ENCODE measurements at regions of chr20 and their contacts with region 1.

Region 1: GRCh38 chr20:63864847-63865640 is at the start of gene TPD52L2:
- H3K4me3 ChIP-seq: peak within 1 kb of the TSS; percentile 93
- H3K27ac ChIP-seq: peak within 1 kb of the TSS; percentile 74
- H3K4me1 ChIP-seq: no peaks in the 10 kb centered on the region
- CTCF ChIP-seq: peak; percentile 14; the same call in 1 of the 2 replicates

Region 2: GRCh38 chr20:63673951-63674350 is 191.1 kb before region 1 on chr20:
- CTCF ChIA-PET with region 1: no interaction called
- POLR2A ChIA-PET with region 1: no interaction called
- H3K4me3 ChIP-seq: no peak overlapping the region
- H3K27ac ChIP-seq: no peak overlapping the region
- H3K4me1 ChIP-seq: no peaks in the 10 kb centered on the region
- CTCF ChIP-seq: no peak

Region 3: GRCh38 chr20:63707549-63708300 is 157.3 kb before region 1 on chr20 and contains the starts of genes ARFRP1 and ZGPAT:
- CTCF ChIA-PET with region 1: no interaction called
- POLR2A ChIA-PET with region 1: interaction called, 16 read pairs
- H3K4me3 ChIP-seq: peak within 1 kb of the TSS; percentile 81
- H3K27ac ChIP-seq: peak within 1 kb of the TSS; percentile 71
- H3K4me1 ChIP-seq: 0 out of 2 replicates have a peak, but pooled peaks cover 3% of the 10 kb centered on the region
- CTCF ChIP-seq: no peak

Region 4: GRCh38 chr20:63740627-63741354 is 124.3 kb before region 1 on chr20:
- CTCF ChIA-PET with region 1: interaction called, 3 read pairs
- POLR2A ChIA-PET with region 1: interaction called, 12 read pairs
- H3K4me3 ChIP-seq: peak overlapping the region; percentile 54
- H3K27ac ChIP-seq: peak overlapping the region; percentile 79
- H3K4me1 ChIP-seq: no peaks in the 10 kb centered on the region; the same call in 1 of the 2 replicates
- CTCF ChIP-seq: peak; percentile 46

Region 5: GRCh38 chr20:63876489-63877036 is 11.5 kb after region 1 on chr20:
- CTCF ChIA-PET with region 1: interaction called, 4 read pairs
- POLR2A ChIA-PET with region 1: interaction called, 18 read pairs
- H3K4me3 ChIP-seq: no peak overlapping the region
- H3K27ac ChIP-seq: no peak overlapping the region
- H3K4me1 ChIP-seq: no peaks in the 10 kb centered on the region
- CTCF ChIP-seq: no peak

Region 6: DNA sequence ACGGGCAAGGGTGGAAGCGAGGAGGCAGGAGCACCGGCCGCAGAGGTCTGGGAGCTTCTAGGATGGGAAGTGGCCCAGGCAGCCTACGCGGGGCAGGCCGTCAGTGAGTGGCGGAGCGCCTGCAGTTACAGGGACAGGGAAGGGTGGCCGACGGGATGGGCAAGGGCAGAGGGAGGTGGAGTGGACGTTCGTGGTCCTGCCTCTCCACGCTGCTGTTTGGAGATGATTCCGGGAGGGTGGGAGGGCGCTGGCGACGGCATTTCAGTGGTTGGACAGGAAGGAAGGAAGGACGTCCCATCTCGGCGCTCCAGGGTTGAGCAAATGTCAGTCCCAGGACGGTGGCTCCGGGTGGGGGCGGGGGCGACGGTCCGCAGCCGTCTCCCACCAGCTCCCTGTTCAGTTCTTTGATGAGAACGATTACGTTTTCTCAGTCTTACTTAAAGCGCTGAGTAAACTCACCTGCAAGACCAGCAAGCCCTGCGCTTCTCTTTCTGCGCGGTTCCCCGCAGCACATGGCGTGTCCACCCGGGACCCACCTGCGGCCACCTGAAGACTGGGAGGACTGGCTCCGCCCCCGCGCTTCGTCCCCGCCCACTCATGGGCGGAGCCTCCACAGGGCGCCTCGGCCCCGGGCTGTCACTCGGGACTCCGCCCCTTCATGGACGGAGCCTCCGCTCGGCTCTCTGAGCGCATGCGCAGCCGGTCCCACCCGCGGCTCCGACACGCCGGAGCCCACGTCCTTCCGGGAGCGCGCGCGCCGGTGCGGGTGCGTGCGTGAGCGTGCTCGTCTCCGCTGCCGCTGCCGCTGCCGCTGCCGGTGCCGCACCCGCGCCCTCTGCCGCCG is 29.5 kb after region 1 on chr20 and contains the start of gene DNAJC5:
- CTCF ChIA-PET with region 1: no interaction called
- POLR2A ChIA-PET with region 1: interaction called, 14 read pairs
- H3K4me3 ChIP-seq: peak within 1 kb of the TSS; percentile 56
- H3K27ac ChIP-seq: no peak within 1 kb of the TSS
- H3K4me1 ChIP-seq: peaks cover 12% of the 10 kb centered on the region
- CTCF ChIP-seq: no peak

Region 7: GRCh38 chr20:63915471-63915870 is 50.4 kb after region 1 on chr20:
- CTCF ChIA-PET with region 1: no interaction called
- POLR2A ChIA-PET with region 1: no interaction called
- H3K4me3 ChIP-seq: no peak overlapping the region
- H3K27ac ChIP-seq: no peak overlapping the region
- H3K4me1 ChIP-seq: peaks cover 2% of the 10 kb centered on the region; the same call in 1 of the 2 replicates
- CTCF ChIP-seq: no peak

Region 8: DNA sequence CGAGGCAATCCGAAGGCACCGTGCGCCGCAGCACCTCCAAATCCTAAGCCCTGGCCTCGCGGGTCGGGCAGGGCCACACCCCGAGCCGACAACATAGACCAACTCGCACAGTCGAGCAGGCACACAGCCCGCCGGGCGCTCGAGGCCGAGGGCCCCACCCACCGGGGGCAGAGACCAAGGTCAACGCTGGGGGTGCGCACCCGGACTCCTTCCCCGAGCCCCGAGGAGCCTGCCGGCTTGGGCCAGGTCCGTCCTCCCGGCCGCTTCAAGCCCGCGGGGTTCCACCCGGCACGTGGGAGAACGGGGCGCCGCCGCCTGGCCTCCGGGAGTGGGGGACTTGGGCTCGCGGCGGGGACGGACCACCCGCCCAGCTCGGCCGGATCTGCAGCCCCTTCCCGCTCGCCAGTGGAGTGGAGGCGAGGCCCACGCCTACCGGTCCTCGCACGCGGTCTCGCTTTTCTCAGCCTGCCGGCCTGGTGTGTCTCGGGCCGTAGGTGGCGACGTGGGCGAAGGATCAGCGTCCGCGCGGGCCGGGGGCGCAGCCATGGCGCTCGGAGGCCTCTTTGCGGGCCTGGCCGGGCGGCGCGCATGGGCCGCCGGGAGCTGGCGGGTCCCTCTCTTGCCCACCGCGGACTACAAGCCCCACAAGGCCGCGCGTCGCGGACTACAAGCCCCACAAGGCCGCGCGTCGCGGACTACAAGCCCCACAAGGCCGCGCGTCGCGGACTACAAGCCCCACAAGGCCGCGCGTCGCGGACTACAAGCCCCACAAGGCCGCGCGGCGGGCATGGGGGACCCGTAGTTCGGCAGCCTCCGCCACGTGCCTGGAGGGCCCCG is 91.0 kb after region 1 on chr20 and contains the start of gene UCKL1:
- CTCF ChIA-PET with region 1: no interaction called
- POLR2A ChIA-PET with region 1: interaction called, 10 read pairs
- H3K4me3 ChIP-seq: peak within 1 kb of the TSS; percentile 99
- H3K27ac ChIP-seq: peak within 1 kb of the TSS; percentile 94
- H3K4me1 ChIP-seq: peaks cover 4% of the 10 kb centered on the region; the same call in 1 of the 2 replicates
- CTCF ChIP-seq: peak; percentile 15

Region 9: GRCh38 chr20:63980806-63981728 is 116.0 kb after region 1 on chr20 and contains the start of gene PRPF6:
- CTCF ChIA-PET with region 1: interaction called, 5 read pairs
- POLR2A ChIA-PET with region 1: interaction called, 11 read pairs
- H3K4me3 ChIP-seq: peak within 1 kb of the TSS; percentile 95
- H3K27ac ChIP-seq: peak within 1 kb of the TSS; percentile 78
- H3K4me1 ChIP-seq: peaks cover 13% of the 10 kb centered on the region
- CTCF ChIP-seq: peak; percentile 100

Measured in HEK293 (cell line).